Thyroid gland (tissue), 4 donors: ENCODE measurements at regions of chr1 and their contacts with region 1.

Region 1: GRCh38 chr1:167728818-167729410 is 7.1 kb downstream of the MPZL1 start:
- DNase-seq: no peak
- H3K4me3 ChIP-seq: no peak overlapping the region
- H3K27ac ChIP-seq: no peak overlapping the region
- H3K4me1 ChIP-seq: peaks cover 5 to 13% of the 10 kb centered on the region in 2 donors
- H3K27me3 ChIP-seq: no peaks in the 10 kb centered on the region
- CTCF ChIP-seq: no peak
- POLR2A ChIP-seq: no peak

Region 2: DNA sequence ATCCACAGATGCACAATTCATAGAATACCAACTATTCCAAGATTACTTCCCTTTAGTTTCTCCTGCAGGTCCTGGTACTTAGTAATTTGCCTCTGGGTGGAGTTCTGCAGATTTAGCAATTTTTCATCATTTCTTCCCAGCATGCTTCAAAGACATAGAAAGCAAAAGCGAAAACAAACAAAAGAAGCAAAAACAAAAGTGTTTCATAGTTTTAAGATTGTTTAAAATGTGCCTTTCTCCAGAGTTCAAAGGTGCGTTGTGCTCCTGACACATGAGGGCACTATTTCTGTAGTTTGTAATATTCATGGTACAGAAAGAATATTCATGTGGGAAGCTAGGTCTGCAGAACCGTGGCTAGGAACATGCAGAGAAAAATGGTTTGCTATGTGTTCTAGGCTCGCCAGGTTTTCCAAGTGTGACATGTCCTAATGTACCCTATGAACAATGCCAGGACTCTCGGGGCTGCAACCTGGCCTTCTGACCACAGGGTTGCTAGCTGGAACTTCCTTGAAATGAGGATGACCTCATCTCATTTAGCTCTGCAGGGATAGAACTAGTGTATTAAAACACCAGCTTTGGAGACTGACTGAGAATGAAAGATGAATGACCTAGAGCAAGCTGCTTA is 128.8 kb before region 1 on chr1:
- intact Hi-C with region 1: no loop called
- DNase-seq: peak; percentile 15 to 26
- H3K4me3 ChIP-seq: no peak overlapping the region
- H3K27ac ChIP-seq: no peak overlapping the region
- H3K4me1 ChIP-seq: peaks cover 0 to 16% of the 10 kb centered on the region in 2 donors
- H3K27me3 ChIP-seq: no peaks in the 10 kb centered on the region
- CTCF ChIP-seq: peak in 3 of 6 experiments; percentile 35 to 39 (median 36)
- POLR2A ChIP-seq: no peak

Region 3: DNA sequence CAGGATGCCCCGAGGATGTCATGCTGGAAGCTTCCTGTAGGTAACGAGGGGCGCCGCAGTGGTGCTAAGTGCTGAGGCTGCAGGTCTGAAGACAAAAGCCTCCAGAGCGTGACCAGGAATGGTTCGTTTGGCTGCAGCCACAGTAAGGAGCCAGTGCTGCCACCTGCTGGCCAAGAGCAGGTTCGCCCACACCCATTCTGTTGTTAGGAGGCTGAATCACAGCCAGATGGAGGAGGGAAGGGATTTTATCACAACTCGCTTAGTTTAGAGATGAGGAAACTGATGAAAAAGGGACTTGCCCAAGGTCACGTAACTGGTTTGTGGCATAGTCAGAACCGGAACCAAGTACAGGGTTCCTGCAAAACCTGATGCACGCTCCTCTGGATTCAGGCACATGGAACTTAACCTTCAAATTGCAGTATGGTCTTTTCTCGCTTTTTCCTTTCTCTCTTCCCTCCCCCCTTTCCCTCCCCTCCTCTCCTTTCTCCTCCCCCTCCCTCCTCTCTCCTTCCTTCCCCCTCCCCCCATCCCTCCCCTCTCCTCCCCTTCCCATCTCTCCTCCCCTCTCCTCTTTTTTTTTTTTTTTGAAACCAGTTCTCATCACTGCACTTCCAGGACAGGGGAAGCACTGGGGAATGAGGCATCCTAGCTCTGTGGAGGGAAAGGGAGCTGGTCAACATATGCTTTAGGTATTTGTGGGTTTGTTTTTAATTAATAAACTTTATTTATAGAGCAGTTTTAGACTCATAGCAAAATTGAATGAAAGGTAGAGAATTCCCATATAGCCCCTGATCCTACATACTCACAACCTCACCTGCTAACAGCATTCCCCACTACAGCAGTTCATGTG is 74.7 kb after region 1 on chr1:
- intact Hi-C with region 1: loop called (anchors 5 kb)
- DNase-seq: peak; percentile 93 to 96
- H3K4me3 ChIP-seq: no peak overlapping the region
- H3K27ac ChIP-seq: no peak overlapping the region
- H3K4me1 ChIP-seq: peaks cover 0 to 15% of the 10 kb centered on the region in 2 donors
- H3K27me3 ChIP-seq: no peaks in the 10 kb centered on the region
- CTCF ChIP-seq: peak; percentile 89 to 96 (median 94)
- POLR2A ChIP-seq: no peak

Region 4: GRCh38 chr1:167862432-167863076 is 133.6 kb after region 1 on chr1:
- intact Hi-C with region 1: no loop called
- DNase-seq: no peak
- H3K4me3 ChIP-seq: no peak overlapping the region
- H3K27ac ChIP-seq: no peak overlapping the region
- H3K4me1 ChIP-seq: no peaks in the 10 kb centered on the region
- H3K27me3 ChIP-seq: no peaks in the 10 kb centered on the region
- CTCF ChIP-seq: no peak
- POLR2A ChIP-seq: no peak